ENCODE measurements at regions of chr2 and their contacts with region 1.

Region 1: GRCh38 chr2:33033606-33034081 is 86.9 kb downstream of the LTBP1 start:
- DNase-seq: peak; percentile 45
- H3K4me3 Mint-ChIP-seq: no peak overlapping the region
- H3K27ac Mint-ChIP-seq: no peak overlapping the region
- H3K4me1 Mint-ChIP-seq: no peaks in the 10 kb centered on the region
- H3K27me3 Mint-ChIP-seq: no peaks in the 10 kb centered on the region
- CTCF ChIP-seq: peak; percentile 62

Region 2: GRCh38 chr2:32553829-32554432 is 479.7 kb before region 1 on chr2:
- CTCF ChIA-PET with region 1: interaction called, 7 read pairs
- POLR2A ChIA-PET with region 1: no interaction called
- intact Hi-C with region 1: loop called (anchors 2 kb)
- DNase-seq: peak; percentile 52
- H3K4me3 Mint-ChIP-seq: no peak overlapping the region
- H3K27ac Mint-ChIP-seq: no peak overlapping the region
- H3K4me1 Mint-ChIP-seq: no peaks in the 10 kb centered on the region
- H3K27me3 Mint-ChIP-seq: no peaks in the 10 kb centered on the region
- CTCF ChIP-seq: peak; percentile 49

Region 3: GRCh38 chr2:32783469-32783868 is 250.2 kb before region 1 on chr2:
- CTCF ChIA-PET with region 1: interaction called, 11 read pairs
- POLR2A ChIA-PET with region 1: interaction called, 3 read pairs
- intact Hi-C with region 1: no loop called
- DNase-seq: no peak
- H3K4me3 Mint-ChIP-seq: no peak overlapping the region
- H3K27ac Mint-ChIP-seq: no peak overlapping the region
- H3K4me1 Mint-ChIP-seq: no peaks in the 10 kb centered on the region
- H3K27me3 Mint-ChIP-seq: no peaks in the 10 kb centered on the region
- CTCF ChIP-seq: no peak

Region 4: GRCh38 chr2:32977228-32977758 is 56.4 kb before region 1 on chr2:
- CTCF ChIA-PET with region 1: interaction called, 10 read pairs
- POLR2A ChIA-PET with region 1: no interaction called
- intact Hi-C with region 1: no loop called
- DNase-seq: peak; percentile 91
- H3K4me3 Mint-ChIP-seq: no peak overlapping the region
- H3K27ac Mint-ChIP-seq: no peak overlapping the region
- H3K4me1 Mint-ChIP-seq: peaks cover 15% of the 10 kb centered on the region
- H3K27me3 Mint-ChIP-seq: no peaks in the 10 kb centered on the region
- CTCF ChIP-seq: no peak

Region 5: DNA sequence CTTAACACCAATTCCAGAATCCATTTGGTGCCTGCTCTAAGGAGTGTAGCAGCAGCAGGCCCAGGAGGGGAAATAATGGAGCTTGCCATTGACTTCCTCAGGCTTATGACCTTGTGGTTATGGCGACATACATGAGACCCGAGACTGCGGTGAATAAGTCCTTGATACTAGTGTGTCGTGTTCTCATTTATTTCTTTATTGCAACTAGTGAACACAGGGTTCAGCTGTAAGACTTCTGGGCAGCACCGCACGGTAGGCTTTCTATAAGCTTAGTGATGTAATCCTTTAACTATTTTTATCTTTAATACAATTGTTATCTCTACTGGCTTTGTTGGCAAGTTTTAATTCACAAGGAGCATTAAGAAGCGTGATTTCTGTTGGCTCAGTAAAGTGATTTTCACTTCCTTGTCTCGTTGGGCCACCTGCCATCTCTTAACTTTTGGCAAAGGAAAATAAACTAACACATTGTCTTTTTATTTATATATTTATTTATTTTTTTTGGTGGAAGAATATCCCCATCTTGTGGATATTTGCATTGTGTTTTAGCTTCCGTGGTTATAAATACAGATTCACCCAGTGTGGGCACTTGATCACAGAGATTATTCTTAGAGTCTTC is 52.9 kb after region 1 on chr2:
- CTCF ChIA-PET with region 1: interaction called, 31 read pairs
- POLR2A ChIA-PET with region 1: no interaction called
- intact Hi-C with region 1: loop called (anchors 1 kb)
- DNase-seq: no peak
- H3K4me3 Mint-ChIP-seq: no peak overlapping the region
- H3K27ac Mint-ChIP-seq: no peak overlapping the region
- H3K4me1 Mint-ChIP-seq: peaks cover 10% of the 10 kb centered on the region
- H3K27me3 Mint-ChIP-seq: no peaks in the 10 kb centered on the region
- CTCF ChIP-seq: peak; percentile 20

Region 6: DNA sequence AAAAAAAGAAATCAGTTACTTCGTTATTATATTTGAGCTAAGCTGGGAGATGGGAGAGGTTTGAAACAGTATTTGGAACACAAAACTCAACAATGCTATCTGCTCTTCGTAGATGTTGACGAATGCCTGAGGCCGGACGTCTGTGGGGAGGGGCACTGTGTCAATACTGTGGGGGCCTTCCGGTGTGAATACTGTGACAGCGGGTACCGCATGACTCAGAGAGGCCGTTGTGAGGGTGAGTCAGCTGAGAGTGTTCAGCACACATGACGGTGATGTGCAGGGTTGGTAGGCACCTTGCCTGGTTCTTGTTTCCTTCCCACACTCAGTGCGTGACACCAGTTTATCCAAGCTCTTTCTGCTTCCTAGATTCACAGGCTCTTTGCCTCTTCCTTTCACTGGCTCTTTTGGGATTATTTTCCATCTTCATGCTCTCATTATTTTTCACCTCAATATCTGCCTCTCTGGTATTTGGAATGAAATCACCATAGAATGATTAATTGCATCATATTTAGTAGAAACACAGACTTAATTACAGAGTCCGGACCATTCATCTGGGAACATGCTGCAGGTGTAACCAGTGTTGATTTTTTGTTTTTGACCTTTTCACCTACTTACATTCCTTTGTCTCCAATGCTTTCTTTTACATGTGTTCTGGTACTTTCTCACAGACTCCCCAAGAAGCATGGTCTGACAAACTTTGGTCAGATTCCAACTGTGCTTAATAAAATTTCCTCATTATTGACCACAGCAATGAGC is 242.2 kb after region 1 on chr2:
- CTCF ChIA-PET with region 1: interaction called, 23 read pairs
- POLR2A ChIA-PET with region 1: no interaction called
- intact Hi-C with region 1: no loop called
- DNase-seq: peak; percentile 93
- H3K4me3 Mint-ChIP-seq: peak overlapping the region; percentile 54
- H3K27ac Mint-ChIP-seq: peak overlapping the region; percentile 76
- H3K4me1 Mint-ChIP-seq: peaks cover 11% of the 10 kb centered on the region
- H3K27me3 Mint-ChIP-seq: no peaks in the 10 kb centered on the region
- CTCF ChIP-seq: no peak

Region 7: DNA sequence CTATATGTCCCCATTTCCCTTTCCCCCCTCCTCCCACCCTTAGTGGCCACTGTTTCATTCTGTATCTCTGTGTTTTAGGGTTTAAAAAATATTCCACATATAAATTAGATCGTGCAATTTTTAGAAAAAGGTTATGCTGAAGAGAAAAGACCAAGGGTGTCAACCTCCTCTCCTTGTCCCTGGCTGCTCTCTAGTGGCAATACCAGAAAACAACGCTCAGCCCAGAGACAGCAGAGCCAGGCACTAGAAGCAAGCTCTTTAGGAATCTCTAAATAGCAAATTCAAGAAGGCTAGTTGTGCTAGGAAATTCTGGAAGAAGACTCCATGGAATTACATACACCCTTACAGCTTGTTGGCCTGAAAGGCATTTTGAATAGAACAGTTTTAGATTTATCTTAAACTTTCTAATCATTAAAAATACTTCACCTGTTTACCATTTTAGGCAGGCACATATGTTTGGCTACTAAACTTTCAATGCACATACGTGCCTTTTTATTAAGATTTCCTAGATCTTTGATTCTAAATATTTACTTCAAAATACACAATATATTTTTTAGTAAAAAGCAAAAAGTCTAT is 407.7 kb after region 1 on chr2:
- CTCF ChIA-PET with region 1: interaction called, 10 read pairs
- POLR2A ChIA-PET with region 1: no interaction called
- intact Hi-C with region 1: loop called (anchors 1 kb)
- DNase-seq: peak; percentile 71
- H3K4me3 Mint-ChIP-seq: no peak overlapping the region
- H3K27ac Mint-ChIP-seq: no peak overlapping the region
- H3K4me1 Mint-ChIP-seq: no peaks in the 10 kb centered on the region
- H3K27me3 Mint-ChIP-seq: no peaks in the 10 kb centered on the region
- CTCF ChIP-seq: peak; percentile 80

Region 8: GRCh38 chr2:33467413-33467812 is 433.8 kb after region 1 on chr2:
- CTCF ChIA-PET with region 1: no interaction called
- POLR2A ChIA-PET with region 1: no interaction called
- intact Hi-C with region 1: no loop called
- DNase-seq: no peak
- H3K4me3 Mint-ChIP-seq: no peak overlapping the region
- H3K27ac Mint-ChIP-seq: no peak overlapping the region
- H3K4me1 Mint-ChIP-seq: no peaks in the 10 kb centered on the region
- H3K27me3 Mint-ChIP-seq: no peaks in the 10 kb centered on the region
- CTCF ChIP-seq: no peak